K562 (cell line): ENCODE measurements at regions of chr7 and their contacts with region 1.

Region 1: DNA sequence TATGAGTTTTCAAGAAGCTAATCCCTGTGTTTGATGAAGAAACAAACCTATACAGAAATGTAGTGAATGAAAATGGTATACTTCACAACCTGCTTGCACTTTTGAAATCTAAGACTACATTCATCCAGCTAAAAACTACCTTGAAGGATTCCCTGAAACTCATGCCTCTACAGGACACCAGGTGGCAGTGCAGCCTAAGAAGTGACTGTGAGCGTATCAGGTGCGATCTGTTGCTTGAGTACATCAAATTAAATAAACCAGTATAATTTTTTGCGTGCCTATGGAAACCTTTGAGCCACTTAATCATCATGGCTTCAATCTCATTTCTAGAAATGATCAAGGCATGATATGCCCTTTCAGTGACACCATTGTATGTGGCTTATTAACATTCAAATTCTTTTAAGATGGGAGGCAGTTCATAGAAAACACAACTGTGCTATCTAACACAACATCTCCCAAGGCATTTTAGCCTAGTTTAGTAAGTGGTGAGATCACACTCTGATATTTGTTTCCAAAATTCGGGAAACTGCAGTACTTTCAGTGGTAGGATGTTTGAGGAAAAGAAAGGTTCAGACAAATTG is 57.4 kb downstream of the PPP1R17 start:
- DNase-seq: peak; percentile 44 to 67 (median 52)
- ATAC-seq: peak; percentile 87
- H3K4me3 ChIP-seq: no peak overlapping the region
- H3K27ac ChIP-seq: no peak overlapping the region
- H3K4me1 ChIP-seq: no peaks in the 10 kb centered on the region
- H3K27me3 ChIP-seq: no peaks in the 10 kb centered on the region
- CTCF ChIP-seq: peak; percentile 67 to 86 (median 74)
- EP300 ChIP-seq: no peak
- POLR2A ChIP-seq: no peak
- RAD21 ChIP-seq: peak; percentile 75 to 89

Region 2: DNA sequence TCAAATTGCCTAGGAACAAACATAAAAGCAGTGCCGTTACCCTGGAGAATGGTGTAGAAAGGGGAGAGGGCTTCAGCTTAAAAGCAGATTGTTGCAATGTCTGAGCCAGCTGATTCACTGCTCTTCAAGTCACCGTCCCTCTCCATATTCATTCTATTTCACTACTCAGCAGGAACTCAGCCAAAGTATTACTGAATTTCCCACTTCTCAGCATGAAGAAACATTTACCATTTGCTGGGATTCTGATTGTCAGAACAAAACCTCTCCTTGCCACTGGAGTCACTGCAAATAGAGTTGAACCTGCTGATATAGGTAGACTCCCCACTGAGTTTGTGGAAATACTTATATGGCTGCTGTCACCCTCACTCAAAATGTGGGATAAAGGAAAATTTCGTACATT is 14.4 kb after region 1 on chr7:
- CTCF ChIA-PET with region 1: no interaction called
- POLR2A ChIA-PET with region 1: no interaction called
- in situ Hi-C with region 1: no loop called
- intact Hi-C with region 1: no loop called
- DNase-seq: no peak
- ATAC-seq: no peak
- H3K4me3 ChIP-seq: no peak overlapping the region
- H3K27ac ChIP-seq: no peak overlapping the region
- H3K4me1 ChIP-seq: no peaks in the 10 kb centered on the region
- H3K27me3 ChIP-seq: no peaks in the 10 kb centered on the region
- CTCF ChIP-seq: no peak
- EP300 ChIP-seq: no peak
- POLR2A ChIP-seq: no peak
- RAD21 ChIP-seq: no peak

Region 3: DNA sequence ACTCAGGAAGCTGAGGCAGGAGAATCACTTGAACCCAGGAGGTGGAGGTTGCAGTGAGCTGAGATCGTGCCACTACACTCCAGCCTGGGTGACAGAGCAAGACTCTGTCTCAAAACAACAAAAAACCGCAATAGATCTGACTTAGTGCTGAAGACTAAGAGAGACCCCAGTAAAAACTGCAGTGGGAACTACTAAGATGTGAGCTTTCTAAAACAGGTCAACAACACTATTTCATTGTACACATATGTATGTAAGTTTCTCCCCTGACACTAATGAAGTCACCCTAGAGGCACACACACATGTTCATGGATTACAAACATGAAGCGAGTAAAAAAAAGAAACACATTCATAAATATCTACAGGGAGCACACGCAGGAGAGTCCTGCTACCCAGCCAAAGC is 257.6 kb after region 1 on chr7:
- CTCF ChIA-PET with region 1: no interaction called
- POLR2A ChIA-PET with region 1: no interaction called
- in situ Hi-C with region 1: no loop called
- intact Hi-C with region 1: no loop called
- DNase-seq: no peak
- ATAC-seq: no peak
- H3K4me3 ChIP-seq: no peak overlapping the region
- H3K27ac ChIP-seq: no peak overlapping the region
- H3K4me1 ChIP-seq: no peaks in the 10 kb centered on the region
- H3K27me3 ChIP-seq: no peaks in the 10 kb centered on the region
- CTCF ChIP-seq: no peak
- EP300 ChIP-seq: no peak
- POLR2A ChIP-seq: no peak
- RAD21 ChIP-seq: no peak

Region 4: GRCh38 chr7:32164346-32164957 is 420.1 kb after region 1 on chr7:
- CTCF ChIA-PET with region 1: interaction called, 5 read pairs
- POLR2A ChIA-PET with region 1: no interaction called
- in situ Hi-C with region 1: no loop called
- intact Hi-C with region 1: loop called (anchors 10 kb)
- DNase-seq: peak; percentile 21 to 24 (median 22)
- ATAC-seq: peak; percentile 76
- H3K4me3 ChIP-seq: no peak overlapping the region
- H3K27ac ChIP-seq: no peak overlapping the region
- H3K4me1 ChIP-seq: no peaks in the 10 kb centered on the region; a peak in 2 of 5 replicates
- H3K27me3 ChIP-seq: no peaks in the 10 kb centered on the region
- CTCF ChIP-seq: peak in 2 of 3 experiments; percentile 13 to 31; a peak in 1 of 6 replicates
- EP300 ChIP-seq: no peak
- POLR2A ChIP-seq: no peak
- RAD21 ChIP-seq: no peak

Region 5: DNA sequence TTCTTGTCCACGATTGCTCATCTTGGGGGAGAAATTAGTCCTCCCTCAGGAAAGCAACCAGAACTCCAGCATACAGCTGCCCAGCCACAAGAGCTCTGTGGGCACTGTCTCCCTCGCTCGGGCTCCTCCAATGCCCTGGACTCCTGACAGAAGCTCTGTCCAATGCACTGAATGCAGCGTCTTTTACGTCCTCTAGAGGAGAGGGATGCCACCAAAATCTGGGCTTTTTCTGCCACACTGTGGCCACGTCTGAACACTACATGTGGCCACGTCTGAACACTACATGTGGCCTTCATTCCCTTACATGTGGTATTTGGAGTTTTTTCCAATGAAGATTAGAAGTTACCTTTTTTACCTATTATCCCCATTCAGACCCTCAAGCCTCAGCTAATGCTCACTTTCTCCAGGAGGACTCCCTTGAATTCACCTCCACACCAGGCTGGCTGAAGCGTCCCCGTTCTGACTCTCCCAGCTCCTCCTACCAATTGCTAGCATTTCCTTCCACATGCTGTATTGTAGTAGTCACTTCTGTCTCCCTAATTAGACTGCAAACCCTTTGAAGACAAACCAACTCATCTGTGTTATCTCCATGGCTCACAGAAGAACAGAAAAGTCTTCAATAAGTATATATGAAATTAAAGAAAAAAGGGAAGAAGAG is 460.1 kb after region 1 on chr7:
- CTCF ChIA-PET with region 1: interaction called, 8 read pairs
- POLR2A ChIA-PET with region 1: no interaction called
- in situ Hi-C with region 1: loop called (anchors 10 kb)
- intact Hi-C with region 1: loop called (anchors 1 kb)
- DNase-seq: peak in 1 of 4 experiments; percentile 34
- ATAC-seq: peak; percentile 84
- H3K4me3 ChIP-seq: no peak overlapping the region
- H3K27ac ChIP-seq: no peak overlapping the region
- H3K4me1 ChIP-seq: no peaks in the 10 kb centered on the region
- H3K27me3 ChIP-seq: no peaks in the 10 kb centered on the region
- CTCF ChIP-seq: peak; percentile 56 to 85 (median 62)
- EP300 ChIP-seq: no peak
- POLR2A ChIP-seq: no peak
- RAD21 ChIP-seq: peak; percentile 27 to 58; a peak in 3 of 4 replicates

Region 6: GRCh38 chr7:32347244-32347828 is 603.0 kb after region 1 on chr7:
- CTCF ChIA-PET with region 1: interaction called, 8 read pairs
- POLR2A ChIA-PET with region 1: no interaction called
- in situ Hi-C with region 1: no loop called
- intact Hi-C with region 1: loop called (anchors 5 kb)
- DNase-seq: peak; percentile 41 to 47 (median 45)
- ATAC-seq: peak; percentile 72; the same call in 2 of the 3 replicates
- H3K4me3 ChIP-seq: no peak overlapping the region
- H3K27ac ChIP-seq: no peak overlapping the region
- H3K4me1 ChIP-seq: no peaks in the 10 kb centered on the region
- H3K27me3 ChIP-seq: no peaks in the 10 kb centered on the region
- CTCF ChIP-seq: peak; percentile 48 to 72 (median 70); a peak in 5 of 6 replicates
- EP300 ChIP-seq: no peak
- POLR2A ChIP-seq: no peak
- RAD21 ChIP-seq: peak; percentile 34 to 62; a peak in 3 of 4 replicates

Region 7: GRCh38 chr7:32479574-32480200 is 735.3 kb after region 1 on chr7:
- CTCF ChIA-PET with region 1: interaction called, 3 read pairs
- POLR2A ChIA-PET with region 1: no interaction called
- in situ Hi-C with region 1: no loop called
- intact Hi-C with region 1: loop called (anchors 1 kb)
- DNase-seq: peak; percentile 56 to 72 (median 57)
- ATAC-seq: peak; percentile 53
- H3K4me3 ChIP-seq: no peak overlapping the region
- H3K27ac ChIP-seq: no peak overlapping the region
- H3K4me1 ChIP-seq: no peaks in the 10 kb centered on the region; a peak in 2 of 5 replicates
- H3K27me3 ChIP-seq: peaks cover 4 to 5% of the 10 kb centered on the region in 2 experiments; a peak in 2 of 5 replicates
- CTCF ChIP-seq: peak; percentile 86 to 98 (median 89)
- EP300 ChIP-seq: no peak
- POLR2A ChIP-seq: no peak
- RAD21 ChIP-seq: peak; percentile 83 to 93

Region 8: DNA sequence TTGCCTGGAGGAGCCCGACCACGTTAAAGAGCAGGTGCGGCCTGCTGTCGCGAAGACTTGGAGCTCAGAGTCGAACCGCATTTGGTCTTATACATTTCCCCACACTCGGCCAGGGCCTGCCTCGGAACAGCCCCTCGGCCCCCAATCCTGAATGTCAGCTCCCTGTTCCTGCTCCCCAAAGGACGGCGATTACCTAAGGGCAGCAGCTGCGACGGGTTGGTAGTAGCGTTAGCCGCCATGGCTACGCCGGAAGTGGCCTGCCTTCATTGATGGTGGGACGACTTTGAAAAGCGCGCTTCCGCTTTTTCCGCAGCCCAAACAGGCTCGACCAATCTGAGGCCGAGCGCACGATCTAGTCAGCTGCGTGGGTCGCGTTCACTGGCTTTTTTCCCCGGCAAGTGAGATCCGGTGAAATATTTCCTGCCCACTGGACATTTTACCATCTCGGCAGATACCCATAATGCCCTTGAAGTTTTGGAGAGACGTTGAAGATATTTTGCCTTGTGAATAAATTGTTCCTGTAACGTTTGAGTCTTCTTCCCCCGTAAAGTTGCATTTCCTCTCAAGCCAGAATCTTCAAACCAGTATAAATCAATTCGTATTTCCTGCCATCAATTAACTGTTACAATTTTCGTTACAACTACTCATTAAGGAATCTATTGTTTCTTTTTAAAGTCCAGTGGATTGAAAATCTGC is 745.9 kb after region 1 on chr7 and contains the start of gene LSM5:
- CTCF ChIA-PET with region 1: no interaction called
- POLR2A ChIA-PET with region 1: no interaction called
- in situ Hi-C with region 1: loop called (anchors 5 kb)
- intact Hi-C with region 1: no loop called
- DNase-seq: peak; percentile 71 to 97 (median 77)
- ATAC-seq: peak; percentile 87
- H3K4me3 ChIP-seq: peak within 1 kb of the TSS; percentile 62
- H3K27ac ChIP-seq: peak within 1 kb of the TSS; percentile 81
- H3K4me1 ChIP-seq: peaks cover 0 to 3% of the 10 kb centered on the region in 2 experiments; a peak in 2 of 5 replicates
- H3K27me3 ChIP-seq: no peaks in the 10 kb centered on the region
- CTCF ChIP-seq: no peak
- EP300 ChIP-seq: peak; percentile 46; the same call in 1 of the 2 replicates
- POLR2A ChIP-seq: peak; percentile 91
- RAD21 ChIP-seq: no peak; a peak in 1 of 4 replicates
- polyA plus RNA-seq, gene LSM5: 513 to 620 TPM

Region 9: DNA sequence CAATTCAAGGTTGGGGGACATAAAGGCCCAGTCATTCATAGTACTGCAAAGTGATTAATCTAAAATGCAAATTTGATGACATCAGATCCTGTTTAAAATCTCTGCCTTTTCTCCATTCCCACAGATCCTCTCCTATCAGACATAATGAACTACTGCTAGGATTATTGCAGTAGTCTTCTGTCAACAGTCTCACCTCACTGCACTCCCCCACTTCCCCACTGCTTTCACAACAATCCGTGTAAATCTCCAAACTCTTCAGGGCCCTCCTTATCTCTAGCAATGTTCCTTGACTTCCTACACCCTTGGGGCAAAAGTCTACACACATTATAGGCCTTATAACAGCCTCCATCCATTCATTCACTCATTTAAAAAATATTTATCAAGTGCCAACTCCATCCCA is 1034.8 kb after region 1 on chr7:
- CTCF ChIA-PET with region 1: no interaction called
- POLR2A ChIA-PET with region 1: no interaction called
- in situ Hi-C with region 1: loop called (anchors 25 kb)
- intact Hi-C with region 1: no loop called
- DNase-seq: peak in 2 of 4 experiments; percentile 19 to 42
- ATAC-seq: peak; percentile 67
- H3K4me3 ChIP-seq: no peak overlapping the region
- H3K27ac ChIP-seq: peak overlapping the region; percentile 56; the same call in 1 of the 3 replicates
- H3K4me1 ChIP-seq: peaks cover 0 to 11% of the 10 kb centered on the region in 2 experiments; a peak in 2 of 5 replicates
- H3K27me3 ChIP-seq: no peaks in the 10 kb centered on the region
- CTCF ChIP-seq: no peak
- EP300 ChIP-seq: 0 out of 2 replicates have a peak, but pooled peaks have one; percentile 25
- POLR2A ChIP-seq: no peak
- RAD21 ChIP-seq: no peak